ENCODE measurements at regions of chr5 and their contacts with region 1.

Region 1: DNA sequence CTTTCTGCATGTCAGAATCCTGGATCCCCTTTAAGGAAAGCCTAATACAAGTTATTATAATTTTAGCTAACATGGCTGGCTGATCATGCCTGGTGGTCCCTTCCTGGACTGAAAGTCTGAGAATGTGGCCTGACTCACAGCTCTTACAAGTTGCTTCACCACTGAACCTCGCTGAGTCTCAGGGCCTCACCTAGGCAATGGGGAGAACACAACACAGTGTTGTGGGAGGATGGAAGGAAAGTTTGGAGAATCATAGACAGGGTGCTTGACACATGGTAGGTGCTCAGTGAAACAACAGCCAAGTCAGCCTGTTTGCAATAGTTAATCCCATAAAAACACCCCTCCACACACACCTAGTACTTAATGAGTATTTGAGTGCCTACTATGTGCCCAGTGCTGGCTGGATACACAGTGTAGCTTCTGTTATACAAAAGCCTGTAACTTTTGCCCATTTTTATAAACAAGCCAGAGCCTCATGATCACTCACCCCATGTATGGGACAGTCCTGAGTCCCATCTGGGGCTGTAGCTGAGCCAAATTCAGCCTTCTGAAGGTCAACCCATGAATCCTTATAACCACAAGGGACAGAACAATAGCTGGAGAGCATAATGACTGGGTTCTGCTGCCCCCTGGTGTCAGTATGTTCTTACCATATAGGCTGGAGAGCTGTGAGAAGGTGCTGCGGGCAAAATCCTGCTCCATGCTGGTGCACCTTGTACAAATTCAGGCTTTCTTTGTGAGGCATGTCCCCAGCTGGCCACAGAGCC is 3.9 kb downstream of the ACSL6 start:
- DNase-seq: peak; percentile 86
- H3K4me3 ChIP-seq: no peak overlapping the region
- H3K27ac ChIP-seq: no peak overlapping the region
- H3K4me1 ChIP-seq: peaks cover 5 to 8% (median 6%) of the 10 kb centered on the region in 4 donors
- H3K27me3 ChIP-seq: peaks cover 34% of the 10 kb centered on the region
- CTCF ChIP-seq: peak; percentile 70 to 85 (median 77)
- EP300 ChIP-seq: no peak
- POLR2A ChIP-seq: no peak

Region 2: DNA sequence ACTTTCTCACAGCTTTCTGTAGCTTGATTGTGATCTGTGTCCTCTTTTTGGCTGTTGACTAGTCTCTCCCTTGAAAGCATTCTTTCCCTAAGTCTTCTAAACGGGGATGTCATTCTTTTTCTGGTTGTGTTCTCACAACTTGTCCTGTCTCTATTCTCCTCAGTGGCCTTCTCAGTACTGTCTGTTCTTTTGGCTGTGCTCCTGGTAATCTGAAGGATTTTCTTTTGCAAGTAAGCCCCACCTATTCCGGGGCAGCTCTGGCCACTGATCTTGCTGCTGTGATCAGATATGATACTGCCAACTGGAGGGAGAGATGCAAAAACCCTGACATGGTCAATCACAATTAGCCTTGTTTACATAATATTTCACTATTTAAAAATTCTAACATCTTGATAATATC is 571.5 kb before region 1 on chr5:
- in situ Hi-C with region 1: loop called in 1 of 4 experiments (anchors 25 kb)
- intact Hi-C with region 1: no loop called
- DNase-seq: no peak
- H3K4me3 ChIP-seq: no peak overlapping the region
- H3K27ac ChIP-seq: peak overlapping the region in 2 of 4 donors; percentile 13
- H3K4me1 ChIP-seq: peaks cover 0 to 3% (median 0%) of the 10 kb centered on the region in 4 donors
- H3K27me3 ChIP-seq: no peaks in the 10 kb centered on the region
- CTCF ChIP-seq: no peak
- EP300 ChIP-seq: no peak
- POLR2A ChIP-seq: no peak

Region 3: DNA sequence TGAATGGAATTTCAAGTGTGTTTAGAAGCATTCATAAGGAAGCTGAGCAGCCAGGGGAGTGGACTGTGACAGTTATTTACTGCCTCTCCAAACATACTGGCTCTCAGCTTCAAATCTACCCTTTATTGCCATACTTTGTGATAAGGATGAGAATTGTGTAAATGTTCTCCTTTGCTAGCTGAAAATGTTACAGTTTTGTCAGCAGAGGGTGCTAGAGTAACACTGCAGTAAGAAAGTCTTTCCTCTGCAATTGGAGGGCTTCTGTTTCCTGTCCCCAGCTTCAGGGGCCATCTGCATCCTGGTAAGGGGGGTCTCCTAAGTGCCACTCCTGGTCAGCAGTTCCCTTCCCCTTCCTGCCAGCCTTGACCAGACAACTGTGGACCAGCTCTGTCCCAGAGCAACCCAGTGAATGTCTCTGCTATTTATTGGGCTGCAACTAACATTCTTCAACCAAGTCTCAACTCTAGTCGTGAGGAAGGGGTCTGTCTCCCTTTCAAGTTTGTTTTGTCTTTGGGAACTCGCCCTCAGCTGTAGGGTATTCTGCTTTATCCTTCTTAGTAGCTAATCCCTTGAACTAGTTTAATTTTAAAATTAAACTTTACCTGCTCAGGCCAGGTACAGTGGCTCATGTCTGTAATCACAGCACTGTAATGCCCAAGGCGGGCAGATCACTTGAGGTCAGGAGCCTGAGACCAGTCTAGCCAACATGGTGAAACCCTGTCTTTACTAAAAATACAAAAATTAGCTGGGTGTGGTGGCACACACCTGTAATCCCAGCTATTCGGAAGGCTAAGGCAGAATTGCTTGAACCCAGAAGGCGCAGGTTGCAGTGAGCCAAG is 417.9 kb before region 1 on chr5:
- in situ Hi-C with region 1: loop called (anchors 5 to 10 kb)
- intact Hi-C with region 1: loop called (anchors 5 kb)
- DNase-seq: peak; percentile 26
- H3K4me3 ChIP-seq: no peak overlapping the region
- H3K27ac ChIP-seq: peak overlapping the region in 1 of 4 donors; percentile 11
- H3K4me1 ChIP-seq: peaks cover 4 to 18% (median 8%) of the 10 kb centered on the region in 4 donors
- H3K27me3 ChIP-seq: no peaks in the 10 kb centered on the region
- CTCF ChIP-seq: peak; percentile 79 to 89 (median 82)
- EP300 ChIP-seq: no peak
- POLR2A ChIP-seq: no peak

Region 4: DNA sequence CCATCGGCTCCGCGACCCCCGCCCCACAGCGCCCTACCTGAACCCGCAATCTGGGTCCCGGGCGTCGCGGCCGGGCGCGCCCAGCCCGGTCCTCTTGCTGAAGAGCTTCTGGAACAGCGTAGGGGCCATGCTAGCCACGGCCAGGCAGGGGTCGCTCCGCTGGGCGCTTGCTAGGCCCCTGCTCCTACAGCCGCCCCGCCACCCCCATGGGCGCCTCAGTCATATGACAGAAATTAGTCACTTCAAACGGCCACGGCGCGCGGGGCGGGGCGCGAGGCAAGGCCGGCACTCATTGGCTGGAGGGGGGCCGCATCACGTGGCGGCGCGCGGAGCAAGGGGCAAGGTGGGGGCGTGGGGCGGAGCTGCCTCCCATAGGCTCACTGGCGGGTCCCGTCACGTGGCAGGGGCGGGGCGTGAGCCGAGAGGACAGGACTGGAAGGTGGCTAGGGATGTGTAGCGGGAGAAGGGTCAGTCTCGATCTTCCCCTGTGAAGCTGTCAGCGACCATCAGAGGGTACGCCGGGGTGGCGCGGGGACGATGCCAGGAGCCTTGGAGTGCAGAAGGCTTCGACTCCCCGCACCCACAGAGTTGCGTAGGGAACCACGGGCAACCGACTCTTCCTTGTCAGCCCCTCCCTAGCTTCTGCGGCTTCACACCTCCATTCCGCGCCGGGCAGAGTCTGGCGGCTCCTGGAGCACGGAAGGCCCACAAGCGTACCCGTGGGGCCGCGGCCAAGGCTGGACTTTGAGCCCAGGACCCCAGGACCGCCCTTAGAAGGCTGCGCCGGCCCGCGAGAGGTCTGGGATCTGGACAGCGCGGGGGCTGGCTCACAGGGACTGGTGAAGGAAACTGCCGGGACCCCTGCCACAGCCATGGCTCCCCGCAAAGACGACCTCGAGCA is 210.5 kb before region 1 on chr5 and contains the start of gene FNIP1:
- in situ Hi-C with region 1: loop called in 1 of 4 experiments (anchors 10 kb)
- intact Hi-C with region 1: no loop called
- DNase-seq: peak; percentile 100
- H3K4me3 ChIP-seq: peak within 1 kb of the TSS; percentile 83 to 96 (median 90)
- H3K27ac ChIP-seq: peak within 1 kb of the TSS; percentile 98 to 99 (median 98)
- H3K4me1 ChIP-seq: peaks cover 15 to 36% (median 19%) of the 10 kb centered on the region in 4 donors
- H3K27me3 ChIP-seq: no peaks in the 10 kb centered on the region
- CTCF ChIP-seq: peak in 1 of 5 experiments; percentile 27
- EP300 ChIP-seq: peak; percentile 54
- POLR2A ChIP-seq: peak; percentile 96
- total RNA-seq, gene FNIP1: 24.3 to 54.9 (median 40.8) TPM

Region 5: DNA sequence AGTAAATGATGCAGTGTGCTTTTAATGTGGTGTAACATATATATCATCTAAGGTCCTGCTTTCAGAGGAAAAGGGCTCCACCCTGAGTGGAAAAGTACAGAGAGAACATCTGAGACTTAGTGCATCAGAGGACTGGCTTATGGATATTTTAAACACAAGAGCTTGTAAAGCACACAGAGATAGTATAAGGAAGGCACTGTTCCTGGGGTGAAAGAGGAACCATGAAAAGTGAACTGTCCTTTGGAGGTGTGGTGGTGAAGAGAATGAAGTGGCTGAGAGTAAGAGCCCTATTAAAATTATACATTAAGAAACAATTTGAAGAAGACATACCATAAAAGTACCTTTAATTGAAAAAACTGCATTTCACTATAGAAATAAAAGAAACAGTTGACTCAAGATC is 134.9 kb after region 1 on chr5:
- in situ Hi-C with region 1: no loop called
- intact Hi-C with region 1: no loop called
- DNase-seq: no peak
- H3K4me3 ChIP-seq: no peak overlapping the region
- H3K27ac ChIP-seq: no peak overlapping the region
- H3K4me1 ChIP-seq: no peaks in the 10 kb centered on the region
- H3K27me3 ChIP-seq: no peaks in the 10 kb centered on the region
- CTCF ChIP-seq: no peak
- EP300 ChIP-seq: no peak
- POLR2A ChIP-seq: no peak